Endothelial cell of umbilical vein (primary cell): ENCODE measurements at regions of chr1 and their contacts with region 1.

Region 1: DNA sequence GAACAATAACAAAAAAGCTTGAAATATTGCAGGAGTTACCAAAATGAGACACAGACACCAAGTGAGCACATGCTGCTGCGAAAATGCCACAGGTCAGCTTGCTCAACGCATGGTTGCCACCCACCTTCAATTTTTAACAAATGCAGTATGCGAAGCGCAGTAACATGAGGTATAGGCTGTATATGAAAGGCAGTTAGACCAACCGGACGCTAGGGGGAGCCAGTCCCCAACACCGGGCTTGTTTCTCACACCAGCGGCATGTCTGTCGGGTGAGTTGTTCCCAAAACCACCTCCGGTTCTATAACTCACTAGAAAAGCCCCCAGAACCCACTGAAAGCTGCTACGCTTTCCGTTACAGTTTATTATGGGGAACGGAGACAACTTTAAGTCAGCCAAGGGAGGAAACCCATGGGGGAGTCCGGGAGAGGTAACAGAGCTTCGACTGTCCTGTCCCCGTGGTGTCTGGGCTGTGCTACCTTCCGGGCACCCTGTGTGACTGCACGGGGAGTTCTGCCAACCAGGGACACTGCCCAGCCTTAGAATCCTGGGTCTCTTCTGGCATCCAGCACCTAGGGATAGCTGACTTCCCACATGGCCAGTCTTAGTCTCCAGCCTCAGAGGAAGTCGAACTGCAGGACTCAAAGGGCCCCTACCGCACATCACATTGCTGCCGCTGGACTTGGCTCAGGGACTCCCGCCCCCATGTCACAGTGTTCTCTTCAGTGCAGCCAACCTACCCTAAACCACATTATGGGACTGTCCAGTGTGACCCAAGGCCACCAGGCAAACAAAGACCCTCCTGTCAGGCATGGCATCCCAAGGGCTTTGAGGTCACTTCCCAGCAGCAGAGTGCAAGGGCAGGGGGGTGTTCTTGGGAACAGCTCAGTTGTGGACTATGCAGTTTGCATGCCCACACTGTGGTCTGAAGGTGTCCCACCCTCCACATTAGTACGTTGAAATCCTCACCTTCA is 14.0 kb downstream of the RNF187 start:
- DNase-seq: peak; percentile 77
- H3K4me3 ChIP-seq: no peak overlapping the region
- H3K27ac ChIP-seq: no peak overlapping the region
- H3K4me1 ChIP-seq: no peaks in the 10 kb centered on the region
- H3K27me3 ChIP-seq: peaks cover 0 to 3% of the 10 kb centered on the region in 2 experiments
- CTCF ChIP-seq: peak; percentile 91 to 94
- POLR2A ChIP-seq: no peak

Region 2: GRCh38 chr1:228387321-228387720 is 113.9 kb before region 1 on chr1:
- CTCF ChIA-PET with region 1: no interaction called
- POLR2A ChIA-PET with region 1: no interaction called
- dilution Hi-C with region 1: no loop called
- intact Hi-C with region 1: loop called (anchors 5 kb)
- DNase-seq: no peak
- H3K4me3 ChIP-seq: no peak overlapping the region
- H3K27ac ChIP-seq: no peak overlapping the region
- H3K4me1 ChIP-seq: no peaks in the 10 kb centered on the region
- H3K27me3 ChIP-seq: peaks cover 4% of the 10 kb centered on the region in 2 experiments
- CTCF ChIP-seq: no peak
- POLR2A ChIP-seq: no peak

Region 3: DNA sequence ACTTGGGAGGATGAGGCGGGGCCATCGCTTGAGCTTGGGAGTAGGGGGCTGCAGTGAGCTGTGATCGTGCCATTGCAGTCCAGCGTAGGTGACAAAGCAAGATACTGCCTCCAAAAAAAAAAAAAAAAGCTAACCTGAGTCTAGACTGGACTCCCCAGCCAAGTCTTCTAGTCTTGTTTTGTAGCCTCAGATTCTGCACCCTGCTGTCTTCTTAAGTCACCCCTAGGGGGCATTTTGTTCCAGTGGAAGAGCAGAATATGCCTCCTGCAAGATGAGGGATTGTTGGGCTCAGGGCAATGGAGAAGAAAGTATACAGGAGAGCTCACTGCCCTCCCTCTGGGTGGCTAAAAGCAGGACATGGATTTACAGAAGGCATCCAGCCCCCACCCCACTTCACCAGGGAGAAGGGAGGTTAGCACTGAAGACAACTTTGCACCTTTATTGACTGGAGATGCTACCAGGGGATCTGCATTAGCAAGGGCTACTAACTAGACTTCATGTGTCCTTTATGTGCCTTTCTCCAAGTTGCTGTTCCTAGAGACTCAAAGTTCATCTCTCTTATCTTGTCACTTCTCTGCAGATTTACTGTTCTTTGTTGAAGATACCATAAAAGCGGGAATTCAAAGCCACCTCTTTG is 29.3 kb before region 1 on chr1:
- CTCF ChIA-PET with region 1: interaction called, 15 read pairs
- POLR2A ChIA-PET with region 1: no interaction called
- dilution Hi-C with region 1: no loop called
- intact Hi-C with region 1: no loop called
- DNase-seq: peak; percentile 34
- H3K4me3 ChIP-seq: no peak overlapping the region
- H3K27ac ChIP-seq: no peak overlapping the region
- H3K4me1 ChIP-seq: peaks cover 15% of the 10 kb centered on the region
- H3K27me3 ChIP-seq: peaks cover 28 to 33% of the 10 kb centered on the region in 2 experiments
- CTCF ChIP-seq: peak; percentile 38 to 55
- POLR2A ChIP-seq: no peak